ENCODE measurements at regions of chr9 and their contacts with region 1.

Region 1: GRCh38 chr9:93037476-93037971 is 21.0 kb upstream of the SUSD3 start:
- H3K4me3 Mint-ChIP-seq: peak overlapping the region; percentile 30
- H3K27ac Mint-ChIP-seq: peak overlapping the region; percentile 83
- H3K4me1 Mint-ChIP-seq: peaks cover 86% of the 10 kb centered on the region
- H3K27me3 Mint-ChIP-seq: peaks cover 3% of the 10 kb centered on the region

Region 2: GRCh38 chr9:92963831-92964626 is 73.5 kb before region 1 on chr9:
- intact Hi-C with region 1: loop called (anchors 10 kb)
- H3K4me3 Mint-ChIP-seq: peak overlapping the region; percentile 96
- H3K27ac Mint-ChIP-seq: peak overlapping the region; percentile 95
- H3K4me1 Mint-ChIP-seq: peaks cover 55% of the 10 kb centered on the region
- H3K27me3 Mint-ChIP-seq: no peaks in the 10 kb centered on the region